H1 (cell line): ENCODE measurements at regions of chr16 and their contacts with region 1.

Region 1: GRCh38 chr16:26645614-26646013 is 421.1 kb upstream of the C16orf82 start:
- DNase-seq: peak in 1 of 2 experiments; percentile 86
- H3K4me3 ChIP-seq: no peak overlapping the region
- H3K27ac ChIP-seq: no peak overlapping the region
- H3K4me1 ChIP-seq: no peaks in the 10 kb centered on the region; a peak in 1 of 7 replicates
- H3K27me3 ChIP-seq: no peaks in the 10 kb centered on the region
- CTCF ChIP-seq: peak; percentile 84 to 92 (median 87)
- EP300 ChIP-seq: no peak
- POLR2A ChIP-seq: no peak
- RAD21 ChIP-seq: peak; percentile 94 to 98

Region 2: GRCh38 chr16:26583803-26584202 is 61.8 kb before region 1 on chr16:
- CTCF ChIA-PET with region 1: interaction called, 10 read pairs
- POLR2A ChIA-PET with region 1: no interaction called
- DNase-seq: no peak
- H3K4me3 ChIP-seq: no peak overlapping the region
- H3K27ac ChIP-seq: no peak overlapping the region
- H3K4me1 ChIP-seq: no peaks in the 10 kb centered on the region
- H3K27me3 ChIP-seq: no peaks in the 10 kb centered on the region
- CTCF ChIP-seq: no peak
- EP300 ChIP-seq: no peak
- POLR2A ChIP-seq: no peak
- RAD21 ChIP-seq: no peak

Region 3: GRCh38 chr16:26614237-26614841 is 31.3 kb before region 1 on chr16:
- CTCF ChIA-PET with region 1: interaction called, 14 read pairs
- POLR2A ChIA-PET with region 1: no interaction called
- DNase-seq: no peak
- H3K4me3 ChIP-seq: no peak overlapping the region
- H3K27ac ChIP-seq: no peak overlapping the region
- H3K4me1 ChIP-seq: no peaks in the 10 kb centered on the region
- H3K27me3 ChIP-seq: no peaks in the 10 kb centered on the region; a peak in 1 of 7 replicates
- CTCF ChIP-seq: no peak
- EP300 ChIP-seq: no peak
- POLR2A ChIP-seq: no peak
- RAD21 ChIP-seq: no peak

Region 4: DNA sequence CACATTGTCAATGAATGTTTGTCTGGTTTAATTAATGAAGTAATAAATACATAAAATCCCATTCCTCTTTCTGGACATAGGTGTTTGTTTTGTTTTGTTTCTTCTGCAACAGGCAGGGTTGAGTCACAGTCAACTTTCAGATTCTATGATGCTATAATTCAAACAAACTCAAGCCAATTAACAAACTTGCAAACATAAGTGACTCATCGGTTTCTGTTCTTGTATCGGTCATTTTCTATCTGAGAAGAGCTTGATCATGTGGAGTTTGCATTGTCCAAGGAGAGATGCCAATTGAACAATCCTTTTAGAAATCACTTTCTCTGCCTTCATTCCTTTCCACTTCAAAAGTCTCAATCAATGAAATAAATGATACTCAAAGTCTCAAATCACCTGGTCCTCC is 126.9 kb after region 1 on chr16:
- CTCF ChIA-PET with region 1: no interaction called
- POLR2A ChIA-PET with region 1: no interaction called
- DNase-seq: no peak
- H3K4me3 ChIP-seq: no peak overlapping the region
- H3K27ac ChIP-seq: no peak overlapping the region
- H3K4me1 ChIP-seq: no peaks in the 10 kb centered on the region
- H3K27me3 ChIP-seq: no peaks in the 10 kb centered on the region; a peak in 2 of 7 replicates
- CTCF ChIP-seq: no peak
- EP300 ChIP-seq: no peak
- POLR2A ChIP-seq: no peak
- RAD21 ChIP-seq: no peak